Transverse colon (tissue), 4 donors: ENCODE measurements at regions of chr6 and their contacts with region 1.

Region 1: DNA sequence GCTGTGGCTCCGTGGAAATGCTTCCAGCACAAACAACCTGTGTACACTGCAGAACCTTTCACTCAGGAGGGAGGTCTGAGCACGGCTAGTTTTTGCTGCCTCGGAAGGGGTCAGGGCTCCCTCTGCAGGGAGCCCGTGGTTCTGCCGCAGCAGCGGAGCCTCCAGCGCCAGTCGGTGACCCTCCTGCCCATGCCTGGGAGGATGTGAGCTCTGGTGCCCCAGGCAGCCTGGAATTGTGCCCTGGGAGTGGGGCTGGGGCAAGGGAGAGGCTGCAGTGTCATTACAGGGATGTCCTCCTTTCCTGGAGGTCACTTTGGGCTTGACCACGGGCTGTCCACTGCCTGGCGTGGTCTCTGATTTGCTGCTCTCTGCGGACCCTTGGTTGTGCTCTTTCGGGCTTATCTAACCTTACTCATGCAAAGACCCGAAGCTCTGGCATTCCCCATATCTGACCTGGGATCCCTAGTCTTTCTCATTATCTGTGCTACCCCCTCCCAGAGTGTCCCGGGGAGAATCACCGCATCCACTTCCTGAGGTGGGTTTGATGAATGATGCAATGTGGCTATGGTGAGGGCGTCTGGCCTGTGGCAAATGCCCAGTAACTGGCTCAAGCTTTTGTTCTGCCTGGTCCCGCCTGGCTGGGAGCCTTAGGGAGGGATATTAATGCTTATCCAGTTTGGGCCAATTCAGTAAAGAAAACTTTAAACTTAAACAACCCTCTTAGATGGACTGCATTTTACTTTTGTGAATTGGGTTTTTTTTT is 59.6 kb upstream of the TAGAP start:
- DNase-seq: peak; percentile 76
- H3K4me3 ChIP-seq: no peak overlapping the region
- H3K27ac ChIP-seq: no peak overlapping the region
- H3K4me1 ChIP-seq: no peaks in the 10 kb centered on the region
- H3K27me3 ChIP-seq: no peaks in the 10 kb centered on the region
- CTCF ChIP-seq: peak; percentile 78 to 88 (median 81)
- EP300 ChIP-seq: no peak
- POLR2A ChIP-seq: no peak

Region 2: DNA sequence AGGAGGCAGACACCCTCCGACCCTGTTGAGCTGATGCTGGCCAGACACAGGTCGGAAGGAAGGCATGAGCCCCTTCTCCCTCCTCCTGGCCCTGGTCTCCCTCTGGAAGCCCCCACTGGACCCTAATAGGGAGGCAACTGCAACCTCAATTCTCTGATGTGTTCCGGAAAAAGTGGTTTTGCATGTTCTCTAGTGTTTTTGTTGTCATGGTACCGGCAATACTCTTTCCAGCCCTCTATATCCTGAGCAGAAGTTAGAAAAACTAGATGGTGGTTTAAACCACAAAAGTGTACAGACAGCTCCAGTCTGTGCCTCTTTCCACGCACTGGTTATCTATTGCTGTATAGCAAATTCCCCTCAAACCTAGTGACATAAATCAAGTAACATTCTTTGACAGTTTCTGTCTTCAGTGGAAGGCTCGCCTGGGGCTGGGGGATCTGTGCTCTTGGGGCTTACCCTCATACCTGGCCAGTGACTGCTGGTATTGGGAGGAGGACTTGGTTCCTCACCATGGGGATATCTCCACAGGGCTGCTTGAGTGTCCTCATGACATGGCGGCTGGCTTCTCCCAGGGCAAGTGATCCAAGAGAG is 417.5 kb before region 1 on chr6:
- in situ Hi-C with region 1: loop called in 1 of 4 experiments (anchors 25 kb)
- intact Hi-C with region 1: no loop called
- DNase-seq: peak; percentile 13
- H3K4me3 ChIP-seq: no peak overlapping the region
- H3K27ac ChIP-seq: peak overlapping the region; percentile 42 to 60 (median 52)
- H3K4me1 ChIP-seq: peaks cover 0 to 26% (median 4%) of the 10 kb centered on the region in 4 donors
- H3K27me3 ChIP-seq: no peaks in the 10 kb centered on the region
- CTCF ChIP-seq: no peak
- EP300 ChIP-seq: no peak
- POLR2A ChIP-seq: peak; percentile 23

Region 3: GRCh38 chr6:158704181-158704822 is 400.0 kb before region 1 on chr6:
- in situ Hi-C with region 1: loop called in 2 of 4 experiments (anchors 25 kb)
- intact Hi-C with region 1: no loop called
- DNase-seq: peak; percentile 93
- H3K4me3 ChIP-seq: peak overlapping the region in 3 of 4 donors; percentile 31 to 56 (median 33)
- H3K27ac ChIP-seq: peak overlapping the region; percentile 74 to 80 (median 76)
- H3K4me1 ChIP-seq: peaks cover 8 to 51% (median 35%) of the 10 kb centered on the region in 4 donors
- H3K27me3 ChIP-seq: no peaks in the 10 kb centered on the region
- CTCF ChIP-seq: peak; percentile 99 to 100 (median 99)
- EP300 ChIP-seq: peak; percentile 49
- POLR2A ChIP-seq: peak; percentile 26

Region 4: GRCh38 chr6:158999666-159000403 is 104.5 kb before region 1 on chr6 and contains the start of gene RSPH3:
- in situ Hi-C with region 1: loop called in 2 of 4 experiments (anchors 10 kb)
- intact Hi-C with region 1: no loop called
- DNase-seq: peak; percentile 97
- H3K4me3 ChIP-seq: peak within 1 kb of the TSS; percentile 58 to 98 (median 85)
- H3K27ac ChIP-seq: peak within 1 kb of the TSS; percentile 90 to 95 (median 92)
- H3K4me1 ChIP-seq: peaks cover 0 to 20% (median 10%) of the 10 kb centered on the region in 4 donors
- H3K27me3 ChIP-seq: no peaks in the 10 kb centered on the region
- CTCF ChIP-seq: peak in 2 of 5 experiments; percentile 5 to 17
- EP300 ChIP-seq: no peak
- POLR2A ChIP-seq: peak; percentile 91
- total RNA-seq, gene RSPH3: 13.3 to 24.1 (median 23.5) TPM

Region 5: GRCh38 chr6:159013229-159013628 is 91.1 kb before region 1 on chr6:
- in situ Hi-C with region 1: loop called in 3 of 4 experiments (anchors 10 kb)
- intact Hi-C with region 1: no loop called
- DNase-seq: no peak
- H3K4me3 ChIP-seq: no peak overlapping the region
- H3K27ac ChIP-seq: no peak overlapping the region
- H3K4me1 ChIP-seq: peaks cover 0 to 4% (median 0%) of the 10 kb centered on the region in 4 donors
- H3K27me3 ChIP-seq: no peaks in the 10 kb centered on the region
- CTCF ChIP-seq: no peak
- EP300 ChIP-seq: no peak
- POLR2A ChIP-seq: no peak

Region 6: DNA sequence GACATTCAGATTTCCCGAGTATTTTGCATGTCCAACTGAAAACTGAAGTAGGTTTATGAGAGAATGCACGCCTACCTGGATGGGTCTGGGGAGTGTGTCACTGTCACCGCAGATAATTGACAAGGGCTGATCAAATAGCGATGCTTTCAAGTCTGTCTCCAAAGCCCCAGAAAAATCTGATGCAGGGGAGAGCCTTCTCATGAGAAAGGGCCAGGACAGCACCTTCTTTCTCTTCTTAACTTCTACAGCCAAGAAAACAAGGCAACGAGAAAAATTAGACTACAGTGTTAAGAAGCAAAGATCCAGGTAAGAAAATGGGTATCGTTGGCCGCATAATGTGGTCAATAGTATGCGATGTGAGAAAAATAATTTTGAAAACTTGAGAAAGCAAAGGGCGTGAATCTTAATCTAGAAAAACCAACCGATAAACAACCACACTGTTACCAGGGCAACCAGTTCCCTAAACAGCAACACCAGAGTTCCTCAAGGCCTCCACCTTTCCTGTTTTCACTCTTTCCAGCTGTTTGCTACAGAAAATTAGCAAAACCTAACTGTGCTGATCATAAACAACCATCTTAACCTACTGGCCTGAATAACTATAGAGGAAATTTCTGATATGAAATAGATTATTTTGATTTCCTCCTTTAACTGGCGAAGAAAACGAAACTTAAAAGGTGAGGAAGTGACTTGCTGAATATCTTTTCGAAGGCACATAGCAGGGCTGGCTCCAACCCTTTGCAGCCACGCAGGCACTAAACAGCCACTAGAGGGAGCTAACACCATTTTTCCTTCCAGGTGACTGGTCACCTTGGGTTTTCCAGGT is 62.1 kb before region 1 on chr6:
- in situ Hi-C with region 1: loop called in 1 of 4 experiments (anchors 10 kb)
- intact Hi-C with region 1: no loop called
- DNase-seq: peak; percentile 79
- H3K4me3 ChIP-seq: peak overlapping the region in 2 of 4 donors; percentile 7 to 45
- H3K27ac ChIP-seq: peak overlapping the region; percentile 59 to 67 (median 64)
- H3K4me1 ChIP-seq: peaks cover 0 to 16% (median 0%) of the 10 kb centered on the region in 4 donors
- H3K27me3 ChIP-seq: no peaks in the 10 kb centered on the region
- CTCF ChIP-seq: peak; percentile 86 to 95 (median 94)
- EP300 ChIP-seq: no peak
- POLR2A ChIP-seq: no peak

Region 7: GRCh38 chr6:159390381-159390780 is 286.0 kb after region 1 on chr6:
- in situ Hi-C with region 1: no loop called
- intact Hi-C with region 1: no loop called
- DNase-seq: no peak
- H3K4me3 ChIP-seq: no peak overlapping the region
- H3K27ac ChIP-seq: no peak overlapping the region
- H3K4me1 ChIP-seq: peaks cover 0 to 6% (median 0%) of the 10 kb centered on the region in 4 donors
- H3K27me3 ChIP-seq: no peaks in the 10 kb centered on the region
- CTCF ChIP-seq: no peak
- EP300 ChIP-seq: no peak
- POLR2A ChIP-seq: no peak